IMR-90 (cell line): ENCODE measurements at regions of chr13 and their contacts with region 1.

Region 1: DNA sequence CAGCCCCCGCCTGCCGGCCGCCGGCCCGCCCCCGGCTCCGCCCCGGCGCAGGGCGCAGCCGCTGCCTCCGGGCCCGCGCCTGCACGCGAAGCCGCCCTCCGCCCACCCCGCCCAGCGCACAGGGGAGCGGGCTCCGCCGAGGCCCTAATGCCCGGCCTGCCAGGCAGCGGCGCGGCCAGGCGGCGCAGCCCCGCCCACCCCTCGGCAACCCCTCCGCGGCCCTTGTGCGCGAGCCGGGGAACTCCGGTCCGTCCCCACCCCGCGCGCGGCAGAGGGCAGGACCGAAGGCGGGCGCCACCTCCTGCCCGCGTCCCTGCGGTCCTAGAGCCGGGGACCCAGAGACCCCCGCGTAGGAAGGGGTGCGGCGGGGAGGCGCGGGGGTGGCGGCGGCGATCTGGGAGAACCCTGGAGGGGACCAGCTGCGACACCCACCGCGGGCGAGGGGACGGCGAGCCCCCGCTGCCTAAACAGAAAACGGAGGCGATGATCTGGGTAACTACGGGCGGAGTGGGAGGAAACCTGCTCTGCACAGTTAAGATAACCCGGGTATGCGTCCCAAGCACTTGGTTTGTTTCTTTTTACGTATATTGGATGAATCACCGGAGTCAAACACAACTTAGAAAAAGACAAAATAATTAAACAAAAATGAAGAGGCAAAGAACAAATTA is 350 bp upstream of the USP12 start:
- DNase-seq: peak; percentile 90
- ATAC-seq: peak; percentile 93
- H3K4me3 ChIP-seq: peak overlapping the region; percentile 64
- H3K27ac ChIP-seq: peak overlapping the region; percentile 95
- H3K4me1 ChIP-seq: peaks cover 12% of the 10 kb centered on the region
- H3K27me3 ChIP-seq: no peaks in the 10 kb centered on the region
- CTCF ChIP-seq: 0 out of 2 replicates have a peak, but pooled peaks have one; percentile 11
- POLR2A ChIP-seq: peak; percentile 61
- RAD21 ChIP-seq: 0 out of 2 replicates have a peak, but pooled peaks have one; percentile 6

Region 2: GRCh38 chr13:27130979-27131623 is 40.9 kb before region 1 on chr13:
- CTCF ChIA-PET with region 1: no interaction called
- POLR2A ChIA-PET with region 1: interaction called, 3 read pairs
- dilution Hi-C with region 1: no loop called
- in situ Hi-C with region 1: no loop called
- intact Hi-C with region 1: loop called (anchors 5 kb)
- DNase-seq: peak; percentile 55
- ATAC-seq: no peak
- H3K4me3 ChIP-seq: no peak overlapping the region
- H3K27ac ChIP-seq: peak overlapping the region; percentile 68; the same call in 1 of the 2 replicates
- H3K4me1 ChIP-seq: peaks cover 23% of the 10 kb centered on the region
- H3K27me3 ChIP-seq: no peaks in the 10 kb centered on the region
- CTCF ChIP-seq: no peak
- POLR2A ChIP-seq: no peak
- RAD21 ChIP-seq: no peak

Region 3: GRCh38 chr13:27182844-27183497 is 11.0 kb after region 1 on chr13:
- CTCF ChIA-PET with region 1: no interaction called
- POLR2A ChIA-PET with region 1: interaction called, 24 read pairs
- dilution Hi-C with region 1: no loop called
- in situ Hi-C with region 1: no loop called
- intact Hi-C with region 1: no loop called
- DNase-seq: peak; percentile 95
- ATAC-seq: peak; percentile 92
- H3K4me3 ChIP-seq: no peak overlapping the region
- H3K27ac ChIP-seq: peak overlapping the region; percentile 58
- H3K4me1 ChIP-seq: peaks cover 3% of the 10 kb centered on the region
- H3K27me3 ChIP-seq: no peaks in the 10 kb centered on the region
- CTCF ChIP-seq: no peak
- POLR2A ChIP-seq: no peak
- RAD21 ChIP-seq: no peak; the same call in none of the 2 replicates

Region 4: DNA sequence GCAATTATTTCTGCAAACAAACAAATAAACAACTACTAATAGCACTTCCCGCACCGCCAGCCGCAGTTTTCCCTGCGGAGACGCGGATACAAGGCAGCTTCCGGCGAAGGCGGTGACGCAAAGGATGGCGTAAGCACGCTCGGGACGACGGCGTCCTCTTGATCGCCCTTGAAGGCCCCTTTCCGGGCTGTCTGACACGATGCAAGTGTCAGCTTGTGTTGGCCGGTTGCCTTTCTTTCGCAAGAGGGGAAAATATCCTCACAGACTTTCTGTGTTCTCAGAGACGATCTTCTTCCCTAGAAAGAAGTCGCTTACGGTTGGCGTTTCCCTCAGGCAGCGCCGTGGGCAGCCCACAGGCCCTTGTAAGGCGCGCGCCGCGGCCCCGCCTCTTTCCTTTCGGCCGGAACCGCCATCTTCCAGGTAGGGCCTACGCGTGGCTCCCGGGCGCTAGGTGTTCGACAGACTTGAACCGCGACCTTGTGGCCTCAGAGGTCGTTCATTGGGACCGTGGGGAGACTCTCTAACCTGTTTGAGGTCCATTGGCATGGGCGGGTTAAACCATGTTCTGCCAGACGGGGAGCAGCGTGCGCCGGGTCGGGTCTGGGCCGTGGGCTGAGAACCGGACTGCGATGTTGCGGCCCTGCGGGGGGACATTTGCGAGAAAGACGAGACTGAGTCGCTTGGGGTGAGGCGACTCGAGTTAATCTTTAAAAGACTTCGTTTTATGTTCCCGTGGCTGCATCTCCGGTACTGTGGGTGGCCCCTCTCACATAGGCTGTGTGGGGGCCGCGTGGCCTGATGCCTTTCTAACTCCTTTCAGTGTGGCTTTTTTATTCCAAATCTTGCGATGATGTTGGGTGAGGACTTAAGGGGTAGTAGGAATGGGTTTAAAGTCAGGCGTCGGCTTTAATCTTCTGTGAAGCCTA is 79.5 kb after region 1 on chr13 and contains the start of gene RPL21:
- CTCF ChIA-PET with region 1: no interaction called
- POLR2A ChIA-PET with region 1: no interaction called
- dilution Hi-C with region 1: no loop called
- in situ Hi-C with region 1: no loop called
- intact Hi-C with region 1: loop called (anchors 1 kb)
- DNase-seq: peak; percentile 99
- ATAC-seq: peak; percentile 96
- H3K4me3 ChIP-seq: peak within 1 kb of the TSS; percentile 71
- H3K27ac ChIP-seq: peak within 1 kb of the TSS; percentile 88
- H3K4me1 ChIP-seq: no peaks in the 10 kb centered on the region; the same call in 1 of the 2 replicates
- H3K27me3 ChIP-seq: no peaks in the 10 kb centered on the region
- CTCF ChIP-seq: no peak
- POLR2A ChIP-seq: peak; percentile 95
- RAD21 ChIP-seq: peak; percentile 2; the same call in 1 of the 2 replicates
- total RNA-seq, gene RPL21: 1,160 and 1,364 TPM in 2 replicates

Region 5: DNA sequence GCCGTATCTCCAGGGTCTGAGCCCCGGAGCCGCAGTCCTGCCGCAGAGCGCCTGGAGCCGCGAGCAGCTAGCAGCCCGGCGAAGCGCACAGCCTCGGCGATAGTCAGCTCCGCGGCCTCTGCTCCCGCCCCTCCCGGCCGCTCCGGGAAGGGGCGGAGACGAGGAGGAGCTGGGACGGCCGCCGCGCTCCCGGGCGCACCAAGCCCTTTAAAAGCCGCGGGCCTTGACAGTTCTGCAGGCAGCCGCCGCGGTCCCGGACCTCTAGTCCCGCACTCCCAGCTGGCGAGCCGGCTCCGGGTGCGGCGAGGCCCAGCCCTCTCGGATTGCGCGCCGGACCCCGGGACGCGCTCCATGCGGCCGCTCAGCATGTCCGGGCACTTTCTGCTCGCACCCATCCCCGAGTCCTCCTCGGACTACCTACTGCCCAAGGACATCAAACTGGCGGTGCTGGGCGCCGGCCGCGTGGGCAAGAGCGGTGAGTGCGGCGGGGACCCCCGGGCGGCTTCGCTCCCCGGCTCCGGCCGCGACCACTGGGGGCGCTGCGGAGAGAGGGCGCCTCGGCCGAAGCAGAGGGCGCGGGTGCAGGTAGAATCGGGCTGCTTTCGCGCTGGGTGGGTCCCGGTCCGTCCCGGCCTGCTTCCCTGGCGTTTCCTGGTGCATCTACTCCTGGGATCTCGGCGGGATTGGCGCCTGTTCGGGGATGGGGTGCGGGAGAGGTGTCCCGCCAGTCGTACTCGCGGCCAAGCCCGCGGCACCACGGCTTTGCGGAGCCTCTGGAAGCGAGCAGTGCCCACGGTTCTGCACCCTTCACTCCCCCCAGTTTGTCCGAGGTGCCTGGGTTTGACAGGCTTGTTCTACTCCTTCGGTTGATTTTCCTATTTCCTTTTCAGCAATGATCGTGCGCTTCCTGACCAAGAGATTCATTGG is 98.9 kb after region 1 on chr13 and contains the start of gene RASL11A:
- CTCF ChIA-PET with region 1: no interaction called
- POLR2A ChIA-PET with region 1: no interaction called
- dilution Hi-C with region 1: no loop called
- in situ Hi-C with region 1: loop called (anchors 10 kb)
- intact Hi-C with region 1: loop called (anchors 2 kb)
- DNase-seq: peak; percentile 87
- ATAC-seq: peak; percentile 93
- H3K4me3 ChIP-seq: peak within 1 kb of the TSS; percentile 89
- H3K27ac ChIP-seq: peak within 1 kb of the TSS; percentile 94
- H3K4me1 ChIP-seq: peaks cover 17% of the 10 kb centered on the region
- H3K27me3 ChIP-seq: no peaks in the 10 kb centered on the region
- CTCF ChIP-seq: peak; percentile 68
- POLR2A ChIP-seq: peak; percentile 97
- RAD21 ChIP-seq: peak; percentile 32
- total RNA-seq, gene RASL11A: 15.3 and 18.5 TPM in 2 replicates